ENCODE measurements at regions of chr5 and their contacts with region 1.

Region 1: DNA sequence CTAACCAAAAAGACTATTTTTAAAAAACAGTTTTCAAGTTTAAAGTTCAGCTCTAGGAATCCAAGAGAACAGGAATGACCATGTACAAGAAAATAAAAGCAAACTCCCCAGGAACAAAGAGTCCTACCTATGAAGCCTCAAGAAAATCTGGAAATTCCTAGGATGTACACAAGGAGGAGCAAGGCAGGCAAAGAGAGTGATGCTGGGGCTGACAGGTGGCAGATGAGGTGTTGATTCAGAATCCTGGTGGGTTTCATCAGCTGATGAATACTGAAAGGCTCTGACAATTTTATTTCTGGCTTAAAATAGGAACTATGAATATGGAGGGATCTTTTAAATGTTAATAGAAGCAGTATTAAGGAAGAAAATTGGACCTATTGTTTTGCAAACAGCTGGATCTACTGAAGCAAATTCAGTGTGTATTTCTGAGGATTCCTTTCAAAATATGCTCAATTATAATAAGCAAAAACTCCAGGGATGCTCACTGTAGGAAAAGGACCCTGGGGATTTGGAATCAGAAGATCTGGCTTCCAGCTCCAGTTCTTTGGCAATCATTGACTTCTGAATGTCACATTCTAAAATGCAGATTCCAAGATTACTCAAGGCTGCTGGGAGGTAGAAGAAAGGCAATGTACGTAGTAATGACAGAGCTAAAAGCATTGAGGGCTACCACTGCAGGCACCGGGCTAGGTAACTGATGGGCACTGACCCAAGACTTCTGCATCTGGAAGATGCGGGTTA is 28.0 kb upstream of the SH3RF2 start:
- DNase-seq: no peak
- H3K4me3 ChIP-seq: no peak overlapping the region
- H3K27ac ChIP-seq: no peak overlapping the region
- H3K4me1 ChIP-seq: no peaks in the 10 kb centered on the region
- H3K27me3 ChIP-seq: no peaks in the 10 kb centered on the region
- CTCF ChIP-seq: peak; percentile 20 to 64

Region 2: DNA sequence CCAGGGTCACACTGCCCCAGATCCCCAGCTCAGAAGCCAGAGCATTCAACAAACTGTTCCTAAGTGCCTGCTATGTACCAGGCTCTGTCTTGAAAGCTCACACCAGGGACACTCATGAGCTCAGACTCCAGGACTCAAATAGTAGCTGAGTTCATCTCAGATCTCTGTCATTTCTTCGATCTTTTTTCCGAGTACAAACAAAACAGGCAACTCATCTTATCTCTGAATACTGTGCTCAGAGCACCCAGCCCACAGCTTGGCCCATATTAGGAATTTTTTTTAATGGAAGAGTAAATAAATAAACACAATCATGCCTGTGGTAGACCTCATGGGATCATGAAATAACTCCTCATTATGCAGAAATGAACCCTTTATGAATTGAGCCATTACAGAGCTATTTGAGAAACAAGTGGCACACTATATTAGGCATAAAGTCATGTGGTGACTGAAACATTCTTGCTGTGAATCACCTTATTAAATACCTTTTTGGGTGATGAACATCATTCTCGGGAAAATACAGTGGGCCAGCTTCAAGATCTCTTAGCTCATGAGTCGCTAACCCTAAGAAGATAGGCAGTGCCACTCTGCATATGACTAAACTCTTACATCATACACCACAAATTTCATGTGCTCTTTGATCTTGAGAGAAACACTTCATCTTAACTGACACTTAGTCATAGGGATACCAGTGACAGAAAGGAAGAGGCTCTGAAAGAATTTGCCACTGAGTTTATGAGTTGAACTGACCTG is 37.9 kb after region 1 on chr5:
- CTCF ChIA-PET with region 1: no interaction called
- dilution Hi-C with region 1: no loop called
- in situ Hi-C with region 1: no loop called
- intact Hi-C with region 1: loop called (anchors 1 kb)
- DNase-seq: peak; percentile 98
- H3K4me3 ChIP-seq: no peak overlapping the region
- H3K27ac ChIP-seq: peak overlapping the region; percentile 65
- H3K4me1 ChIP-seq: peaks cover 83% of the 10 kb centered on the region
- H3K27me3 ChIP-seq: no peaks in the 10 kb centered on the region
- CTCF ChIP-seq: no peak

Region 3: GRCh38 chr5:145980718-145981117 is 72.3 kb after region 1 on chr5:
- CTCF ChIA-PET with region 1: interaction called, 3 read pairs
- dilution Hi-C with region 1: no loop called
- in situ Hi-C with region 1: no loop called
- intact Hi-C with region 1: loop called (anchors 1 kb)
- DNase-seq: no peak
- H3K4me3 ChIP-seq: no peak overlapping the region
- H3K27ac ChIP-seq: no peak overlapping the region
- H3K4me1 ChIP-seq: peaks cover 32% of the 10 kb centered on the region
- H3K27me3 ChIP-seq: no peaks in the 10 kb centered on the region
- CTCF ChIP-seq: peak; percentile 17 to 33

Region 4: GRCh38 chr5:146001544-146002185 is 93.3 kb after region 1 on chr5:
- CTCF ChIA-PET with region 1: no interaction called
- dilution Hi-C with region 1: no loop called
- in situ Hi-C with region 1: no loop called
- intact Hi-C with region 1: no loop called
- DNase-seq: no peak
- H3K4me3 ChIP-seq: no peak overlapping the region
- H3K27ac ChIP-seq: no peak overlapping the region
- H3K4me1 ChIP-seq: peaks cover 6% of the 10 kb centered on the region
- H3K27me3 ChIP-seq: no peaks in the 10 kb centered on the region
- CTCF ChIP-seq: no peak

Measured in mammary epithelial cell (primary cell).